ENCODE measurements at regions of chr5 and their contacts with region 1.

Region 1: GRCh38 chr5:74296685-74297408 is 343.7 kb downstream of the ENC1 start:
- DNase-seq: no peak
- ATAC-seq: no peak
- H3K4me3 ChIP-seq: no peak overlapping the region
- H3K27ac ChIP-seq: no peak overlapping the region
- H3K4me1 ChIP-seq: no peaks in the 10 kb centered on the region
- CTCF ChIP-seq: no peak
- EP300 ChIP-seq: no peak
- POLR2A ChIP-seq: no peak
- RAD21 ChIP-seq: no peak

Region 2: DNA sequence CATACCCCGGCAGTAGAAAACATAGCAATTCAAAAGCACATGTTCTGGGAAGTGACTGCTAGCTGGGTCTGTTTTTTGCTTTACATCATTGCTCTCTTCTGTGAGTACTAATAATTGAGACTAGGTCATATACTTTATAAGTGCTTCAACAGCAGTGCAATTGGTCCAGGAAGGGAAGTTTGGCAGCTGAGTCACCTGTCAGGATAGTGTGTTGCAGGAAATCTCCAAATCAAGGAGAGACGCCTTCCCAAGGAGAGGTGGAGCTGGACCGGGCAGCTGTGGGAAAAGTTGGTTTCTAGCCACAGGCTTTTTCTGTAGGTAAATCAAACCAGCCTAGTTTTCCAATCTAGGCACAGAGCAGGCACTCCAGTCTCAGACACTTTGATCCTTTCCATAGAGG is 13.5 kb after region 1 on chr5:
- CTCF ChIA-PET with region 1: interaction called, 10 read pairs
- POLR2A ChIA-PET with region 1: no interaction called
- DNase-seq: no peak
- ATAC-seq: no peak
- H3K4me3 ChIP-seq: no peak overlapping the region
- H3K27ac ChIP-seq: no peak overlapping the region
- H3K4me1 ChIP-seq: peaks cover 6% of the 10 kb centered on the region
- CTCF ChIP-seq: no peak
- EP300 ChIP-seq: no peak
- POLR2A ChIP-seq: no peak
- RAD21 ChIP-seq: no peak